Activated naive CD8-positive, alpha-beta T cell treated with anti-CD3 and anti-CD28 coated beads, Interleukin-2, amount 10 ng/mL, durations not matched to agents 7 days and 5 days (primary cell): ENCODE measurements at regions of chr6 and their contacts with region 1.

Region 1: DNA sequence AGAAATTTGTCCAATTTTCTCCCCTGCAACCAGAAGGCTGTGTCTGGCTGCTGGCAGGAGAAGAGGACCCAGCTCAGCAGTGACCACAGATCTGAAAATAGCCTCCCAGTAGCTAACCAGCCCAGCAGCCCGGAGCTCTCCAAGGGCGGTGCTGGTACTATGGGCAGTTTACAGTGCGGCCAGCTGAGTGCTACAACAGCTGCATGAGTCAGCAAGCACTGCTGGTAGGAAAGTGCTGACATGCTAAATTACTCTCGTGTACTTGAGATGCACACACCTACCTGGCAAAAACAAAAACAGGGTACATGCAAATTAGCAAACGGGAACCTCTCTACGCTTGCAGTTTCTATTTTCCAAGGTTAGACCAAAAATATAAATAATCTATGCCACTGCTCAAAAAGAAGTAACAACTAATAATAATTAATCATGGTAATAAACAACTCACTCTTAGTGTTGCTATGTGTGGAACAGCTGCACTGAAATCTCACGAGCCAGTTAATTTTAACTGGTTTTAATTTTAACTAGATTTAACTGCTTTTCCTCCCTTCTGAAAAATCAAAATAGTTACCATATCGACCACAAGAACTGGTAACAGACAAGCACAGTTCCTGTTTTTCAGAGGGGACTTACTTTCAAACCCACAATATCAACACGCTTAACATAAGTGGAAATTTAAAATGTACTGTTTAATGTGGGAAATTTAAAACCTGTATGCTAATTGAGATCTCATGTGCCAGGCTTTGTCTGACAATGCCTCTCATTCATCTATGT is 10.8 kb downstream of the BACH2 start:
- DNase-seq: peak; percentile 56
- ATAC-seq: peak; percentile 44
- H3K4me3 Mint-ChIP-seq: peak overlapping the region; percentile 86
- H3K27ac Mint-ChIP-seq: peak overlapping the region; percentile 95
- H3K4me1 Mint-ChIP-seq: peaks cover 83% of the 10 kb centered on the region
- H3K27me3 Mint-ChIP-seq: no peaks in the 10 kb centered on the region

Region 2: GRCh38 chr6:90274451-90275030 is 11.3 kb before region 1 on chr6:
- POLR2A ChIA-PET with region 1: interaction called, 46 read pairs
- DNase-seq: peak; percentile 76
- ATAC-seq: peak; percentile 81
- H3K4me3 Mint-ChIP-seq: peak overlapping the region; percentile 73
- H3K27ac Mint-ChIP-seq: peak overlapping the region; percentile 90
- H3K4me1 Mint-ChIP-seq: peaks cover 84% of the 10 kb centered on the region
- H3K27me3 Mint-ChIP-seq: no peaks in the 10 kb centered on the region